ENCODE measurements at regions of chr9 and their contacts with region 1.

Region 1: GRCh38 chr9:122912964-122913673 is at the start of gene ZBTB6:
- DNase-seq: peak; percentile 52 to 82 (median 74)
- H3K4me3 ChIP-seq: peak within 1 kb of the TSS; percentile 99
- H3K4me3 Mint-ChIP-seq: peak within 1 kb of the TSS; percentile 89 to 100 (median 97)
- H3K27ac ChIP-seq: peak within 1 kb of the TSS; percentile 91
- H3K27ac Mint-ChIP-seq: peak within 1 kb of the TSS; percentile 92 to 100 (median 99)
- H3K4me1 ChIP-seq: peaks cover 20% of the 10 kb centered on the region
- H3K4me1 Mint-ChIP-seq: peaks cover 24 to 41% (median 38%) of the 10 kb centered on the region in 3 donors
- H3K27me3 ChIP-seq: no peaks in the 10 kb centered on the region
- H3K27me3 Mint-ChIP-seq: peaks cover 0 to 2% of the 10 kb centered on the region in 2 donors
- total RNA-seq, gene ZBTB6: 11.6 to 12.6 TPM

Region 2: DNA sequence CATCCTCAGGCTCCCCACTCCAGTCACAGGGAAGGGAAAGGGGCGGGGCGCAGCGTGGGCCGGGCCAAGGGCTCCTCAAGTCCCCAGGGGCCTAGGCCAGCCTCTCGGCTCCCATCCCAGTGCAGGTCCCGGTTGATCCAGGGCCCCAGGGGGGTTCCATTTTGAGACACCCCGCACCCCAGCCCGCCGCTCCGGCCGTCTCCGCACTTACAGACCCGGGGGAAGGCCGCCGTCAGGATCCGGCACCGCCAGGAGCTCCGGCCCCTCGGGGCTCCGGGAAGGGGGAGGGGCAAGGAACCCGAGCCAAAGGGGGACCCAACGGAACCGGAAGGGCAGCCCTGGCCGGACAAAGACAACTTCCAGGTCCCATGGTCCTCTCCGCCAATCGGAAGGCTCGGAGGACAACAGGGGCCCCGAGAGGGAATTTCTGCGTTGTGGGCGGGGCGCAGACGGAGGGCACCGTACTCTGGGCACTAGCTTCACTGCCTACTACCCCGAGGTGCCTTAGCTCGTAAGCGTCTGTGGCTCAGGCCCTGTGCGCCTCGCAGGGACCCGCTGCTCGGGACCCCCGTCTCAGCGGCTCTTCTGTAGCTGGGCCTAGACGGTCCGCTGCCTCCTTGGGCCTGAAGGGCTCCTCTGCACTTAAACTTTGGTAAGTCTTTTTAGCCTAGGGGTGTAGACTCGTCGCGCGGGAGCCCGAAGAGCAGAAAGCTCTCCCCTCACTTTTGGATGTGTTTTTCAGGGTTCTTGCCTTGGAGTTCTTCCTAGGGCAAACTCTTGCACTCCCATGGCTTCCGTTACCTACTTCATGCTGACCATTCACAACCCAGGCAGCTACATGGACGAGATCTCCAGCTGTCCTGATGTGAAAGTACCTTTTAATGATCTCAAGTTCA is 18.4 kb after region 1 on chr9 and contains the start of gene ZBTB26:
- CTCF ChIA-PET with region 1: interaction called, 8 read pairs
- POLR2A ChIA-PET with region 1: interaction called, 15 read pairs
- DNase-seq: peak; percentile 85 to 92 (median 88)
- H3K4me3 ChIP-seq: peak within 1 kb of the TSS; percentile 79
- H3K4me3 Mint-ChIP-seq: no peak within 1 kb of the TSS
- H3K27ac ChIP-seq: peak within 1 kb of the TSS; percentile 78
- H3K27ac Mint-ChIP-seq: peak within 1 kb of the TSS in 6 of 8 donors; percentile 88 to 98 (median 96)
- H3K4me1 ChIP-seq: peaks cover 29% of the 10 kb centered on the region
- H3K4me1 Mint-ChIP-seq: peaks cover 23 to 35% (median 28%) of the 10 kb centered on the region in 3 donors
- H3K27me3 ChIP-seq: no peaks in the 10 kb centered on the region
- H3K27me3 Mint-ChIP-seq: no peaks in the 10 kb centered on the region
- total RNA-seq, gene ZBTB26: 4.8 to 5.4 TPM

Region 3: DNA sequence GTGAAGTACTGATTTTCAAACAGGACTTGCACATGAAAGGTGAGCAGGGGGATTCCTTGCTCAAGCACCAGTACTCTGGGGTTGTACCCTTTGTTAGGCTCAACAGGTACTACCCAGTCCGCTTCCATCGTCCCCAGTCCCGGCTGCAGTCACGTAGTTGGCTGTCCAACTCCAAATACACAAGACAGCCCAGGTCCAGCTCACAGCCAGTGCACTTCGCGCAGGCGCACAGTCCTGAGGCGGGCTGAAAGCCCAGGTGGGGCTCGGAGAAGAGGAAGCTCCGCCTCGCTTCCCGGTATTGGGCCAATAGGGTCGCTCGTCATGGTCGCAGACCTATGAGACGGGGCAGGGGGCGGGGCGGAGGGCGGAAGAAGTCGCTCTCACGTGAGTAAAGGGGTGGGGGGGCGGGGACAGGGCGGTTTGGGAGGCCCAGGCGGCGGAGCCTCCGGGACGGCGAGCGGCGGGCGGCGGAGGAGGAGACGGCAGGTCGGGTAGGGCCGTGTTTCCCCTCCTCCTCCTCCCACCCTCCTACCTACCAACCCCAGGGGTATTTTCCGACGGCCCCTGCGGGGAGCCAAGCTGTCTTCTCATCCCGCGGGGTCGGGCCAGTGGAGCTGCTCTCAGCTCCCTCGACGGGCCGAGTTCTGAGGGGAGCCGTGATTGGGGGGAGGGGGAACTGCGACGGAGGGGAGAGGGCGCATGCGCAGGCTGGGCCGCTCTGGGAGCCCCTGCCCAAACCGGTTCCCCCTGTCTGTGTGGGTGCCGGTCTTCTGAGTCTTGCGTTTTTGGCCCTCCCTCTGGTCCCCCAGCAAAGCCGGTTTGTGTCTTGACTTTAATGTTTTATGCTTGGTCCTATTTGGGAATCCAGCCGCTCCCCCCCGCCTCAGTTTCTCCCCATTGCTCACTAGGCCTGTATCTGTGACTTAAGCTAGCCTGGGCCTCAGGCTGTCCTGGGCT is 27.8 kb after region 1 on chr9 and contains the start of gene RABGAP1:
- CTCF ChIA-PET with region 1: interaction called, 3 read pairs
- POLR2A ChIA-PET with region 1: interaction called, 19 read pairs
- DNase-seq: peak; percentile 94 to 99 (median 99)
- H3K4me3 ChIP-seq: peak within 1 kb of the TSS; percentile 80
- H3K4me3 Mint-ChIP-seq: peak within 1 kb of the TSS; percentile 90 to 96 (median 93)
- H3K27ac ChIP-seq: peak within 1 kb of the TSS; percentile 84
- H3K27ac Mint-ChIP-seq: peak within 1 kb of the TSS; percentile 82 to 98 (median 95)
- H3K4me1 ChIP-seq: peaks cover 21% of the 10 kb centered on the region
- H3K4me1 Mint-ChIP-seq: peaks cover 25 to 45% (median 42%) of the 10 kb centered on the region in 3 donors
- H3K27me3 ChIP-seq: no peaks in the 10 kb centered on the region
- H3K27me3 Mint-ChIP-seq: peaks cover 0 to 2% of the 10 kb centered on the region in 2 donors
- total RNA-seq, gene RABGAP1: 20.7 to 22.2 TPM